ENCODE measurements at regions of chr18 and their contacts with region 1.

Region 1: DNA sequence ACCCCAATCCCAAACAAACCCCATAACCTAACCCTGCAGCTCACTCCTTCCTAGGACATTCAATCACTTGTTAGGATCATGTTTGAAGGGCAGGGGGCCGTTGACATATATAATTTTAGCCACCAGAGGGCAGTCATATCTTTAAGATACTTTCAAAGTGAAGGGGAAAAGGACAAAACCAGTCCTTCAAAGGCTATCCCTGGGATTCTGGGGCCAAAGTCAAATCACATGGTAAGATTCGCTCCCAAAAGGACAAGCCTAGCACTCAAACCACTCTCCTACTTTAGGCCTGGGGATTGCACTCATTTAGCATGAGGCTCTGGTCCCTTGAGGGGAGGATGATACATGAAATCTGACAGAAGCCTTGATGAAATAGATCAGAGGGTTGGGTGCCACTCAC is 44.6 kb downstream of the HAUS1 start:
- DNase-seq: peak; percentile 67
- H3K4me3 Mint-ChIP-seq: no peak overlapping the region
- H3K27ac Mint-ChIP-seq: peak overlapping the region; percentile 8
- H3K4me1 Mint-ChIP-seq: peaks cover 24% of the 10 kb centered on the region
- H3K27me3 Mint-ChIP-seq: no peaks in the 10 kb centered on the region
- CTCF ChIP-seq: peak; percentile 58

Region 2: DNA sequence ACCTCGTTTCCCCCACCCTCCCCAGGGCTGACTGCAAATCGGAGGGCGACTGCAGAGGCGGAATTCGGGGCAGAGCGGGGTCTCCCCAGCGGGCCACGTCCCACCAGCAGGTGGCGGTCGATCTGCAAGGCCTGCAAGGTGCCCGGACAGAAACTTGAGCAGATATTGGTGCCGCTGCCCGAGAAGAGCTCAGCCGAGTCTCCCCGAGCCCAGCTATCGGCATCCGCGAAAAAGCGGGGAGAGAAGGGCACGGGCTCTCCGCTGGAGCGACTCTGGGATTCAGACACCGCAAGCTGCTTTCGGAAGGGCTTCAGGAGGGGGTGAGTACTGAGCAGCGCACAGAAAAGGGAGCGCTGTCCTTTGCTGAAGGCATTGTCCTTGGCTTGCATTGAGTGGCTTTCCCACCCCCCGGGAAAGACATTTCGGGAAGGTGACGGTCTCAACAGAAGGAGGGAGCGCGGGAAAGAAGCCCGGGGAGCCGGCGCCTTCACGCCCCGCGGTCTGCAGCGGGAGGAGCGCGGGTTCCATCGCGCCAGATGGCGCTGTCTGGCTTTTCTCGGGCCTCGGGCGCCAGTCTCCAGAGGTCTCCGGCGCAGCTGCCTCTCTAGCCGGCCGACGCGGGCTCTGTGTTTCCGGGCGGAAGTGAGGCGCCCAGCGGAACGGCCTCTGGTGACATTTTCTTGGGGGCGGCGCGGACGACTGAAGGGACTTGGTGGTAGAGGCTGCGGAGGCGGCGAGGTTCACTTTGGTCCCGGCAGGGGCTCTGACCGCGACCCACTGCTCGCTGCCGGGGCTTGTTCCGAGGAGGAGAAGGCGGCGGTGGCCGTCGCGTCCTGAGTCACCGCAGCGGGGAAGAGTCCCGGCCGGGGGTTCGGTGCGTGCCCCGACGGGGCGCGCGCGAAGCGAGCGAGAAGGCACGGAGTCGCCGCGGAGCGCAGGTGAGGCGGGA is 24.9 kb after region 1 on chr18:
- CTCF ChIA-PET with region 1: interaction called, 26 read pairs
- intact Hi-C with region 1: loop called (anchors 1 kb)
- DNase-seq: peak; percentile 97
- H3K4me3 Mint-ChIP-seq: peak overlapping the region; percentile 97
- H3K27ac Mint-ChIP-seq: peak overlapping the region; percentile 97
- H3K4me1 Mint-ChIP-seq: peaks cover 9% of the 10 kb centered on the region
- H3K27me3 Mint-ChIP-seq: no peaks in the 10 kb centered on the region
- CTCF ChIP-seq: peak; percentile 93

Region 3: DNA sequence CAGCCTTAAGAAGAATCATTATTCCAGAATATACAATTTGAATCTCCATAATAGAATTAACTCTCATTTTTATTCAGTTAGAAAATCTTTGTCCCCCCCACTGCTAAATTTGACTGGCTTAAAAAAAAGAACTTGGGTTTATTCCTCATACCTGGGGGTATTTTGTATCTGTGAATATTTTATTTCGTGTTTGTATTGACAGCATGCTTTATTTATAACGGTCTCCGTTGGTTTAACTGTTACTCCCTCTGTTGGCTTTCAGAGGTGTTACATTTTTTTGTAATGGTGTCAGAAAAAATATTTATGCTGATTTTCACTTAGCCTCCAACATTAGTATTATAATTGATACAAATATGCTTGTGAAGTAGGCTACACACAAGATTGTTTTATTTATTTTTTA is 64.5 kb after region 1 on chr18:
- CTCF ChIA-PET with region 1: interaction called, 3 read pairs
- intact Hi-C with region 1: loop called (anchors 2 kb)
- DNase-seq: no peak
- H3K4me3 Mint-ChIP-seq: no peak overlapping the region
- H3K27ac Mint-ChIP-seq: no peak overlapping the region
- H3K4me1 Mint-ChIP-seq: peaks cover 17% of the 10 kb centered on the region
- H3K27me3 Mint-ChIP-seq: no peaks in the 10 kb centered on the region
- CTCF ChIP-seq: peak; percentile 52

Region 4: GRCh38 chr18:46622999-46623398 is 474.2 kb after region 1 on chr18:
- CTCF ChIA-PET with region 1: no interaction called
- intact Hi-C with region 1: loop called (anchors 2 kb)
- DNase-seq: no peak
- H3K4me3 Mint-ChIP-seq: no peak overlapping the region
- H3K27ac Mint-ChIP-seq: no peak overlapping the region
- H3K4me1 Mint-ChIP-seq: no peaks in the 10 kb centered on the region
- H3K27me3 Mint-ChIP-seq: peaks cover 91% of the 10 kb centered on the region
- CTCF ChIP-seq: no peak

Region 5: GRCh38 chr18:46660955-46661749 is 512.3 kb after region 1 on chr18:
- CTCF ChIA-PET with region 1: interaction called, 14 read pairs
- intact Hi-C with region 1: loop called (anchors 1 kb)
- DNase-seq: peak; percentile 17
- H3K4me3 Mint-ChIP-seq: no peak overlapping the region
- H3K27ac Mint-ChIP-seq: no peak overlapping the region
- H3K4me1 Mint-ChIP-seq: no peaks in the 10 kb centered on the region
- H3K27me3 Mint-ChIP-seq: peaks cover 84% of the 10 kb centered on the region
- CTCF ChIP-seq: no peak

Measured in Calu3 (cell line).